ENCODE measurements at regions of chr3 and their contacts with region 1.

Region 1: DNA sequence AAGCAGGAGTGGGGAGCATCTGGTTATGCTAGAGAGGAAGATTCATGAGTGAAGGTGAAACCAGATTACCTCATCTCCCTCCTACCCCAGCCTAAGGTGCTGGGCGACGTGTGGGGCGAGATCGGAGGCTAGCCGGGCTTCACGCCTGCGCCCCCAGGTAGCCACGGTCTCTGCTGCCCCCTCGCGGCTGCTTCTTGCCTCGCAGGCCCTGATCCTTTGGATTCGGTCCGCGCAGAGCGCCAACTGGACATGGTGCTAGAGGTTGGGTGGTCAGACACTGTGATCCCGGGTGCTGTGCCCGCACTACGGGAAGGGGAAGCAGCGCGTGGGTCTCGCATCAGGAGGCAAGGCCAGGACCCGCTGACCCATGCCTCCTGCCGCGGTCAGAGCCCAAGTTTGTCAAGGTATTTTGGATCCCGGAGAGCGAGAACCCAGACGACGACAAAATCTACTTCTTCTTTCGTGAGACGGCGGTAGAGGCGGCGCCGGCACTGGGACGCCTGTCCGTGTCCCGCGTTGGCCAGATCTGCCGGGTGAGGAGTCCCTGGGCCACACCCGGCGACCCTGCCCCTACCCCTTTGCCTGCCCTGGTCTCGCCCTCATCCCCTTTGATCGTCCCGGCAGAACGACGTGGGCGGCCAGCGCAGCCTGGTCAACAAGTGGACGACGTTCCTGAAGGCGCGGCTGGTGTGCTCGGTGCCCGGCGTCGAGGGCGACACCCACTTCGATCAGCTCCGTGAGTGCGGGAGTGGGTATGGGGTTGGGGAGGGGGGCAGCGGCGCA is 4.2 kb downstream of the SEMA3B start:
- DNase-seq: peak; percentile 96

Region 2: DNA sequence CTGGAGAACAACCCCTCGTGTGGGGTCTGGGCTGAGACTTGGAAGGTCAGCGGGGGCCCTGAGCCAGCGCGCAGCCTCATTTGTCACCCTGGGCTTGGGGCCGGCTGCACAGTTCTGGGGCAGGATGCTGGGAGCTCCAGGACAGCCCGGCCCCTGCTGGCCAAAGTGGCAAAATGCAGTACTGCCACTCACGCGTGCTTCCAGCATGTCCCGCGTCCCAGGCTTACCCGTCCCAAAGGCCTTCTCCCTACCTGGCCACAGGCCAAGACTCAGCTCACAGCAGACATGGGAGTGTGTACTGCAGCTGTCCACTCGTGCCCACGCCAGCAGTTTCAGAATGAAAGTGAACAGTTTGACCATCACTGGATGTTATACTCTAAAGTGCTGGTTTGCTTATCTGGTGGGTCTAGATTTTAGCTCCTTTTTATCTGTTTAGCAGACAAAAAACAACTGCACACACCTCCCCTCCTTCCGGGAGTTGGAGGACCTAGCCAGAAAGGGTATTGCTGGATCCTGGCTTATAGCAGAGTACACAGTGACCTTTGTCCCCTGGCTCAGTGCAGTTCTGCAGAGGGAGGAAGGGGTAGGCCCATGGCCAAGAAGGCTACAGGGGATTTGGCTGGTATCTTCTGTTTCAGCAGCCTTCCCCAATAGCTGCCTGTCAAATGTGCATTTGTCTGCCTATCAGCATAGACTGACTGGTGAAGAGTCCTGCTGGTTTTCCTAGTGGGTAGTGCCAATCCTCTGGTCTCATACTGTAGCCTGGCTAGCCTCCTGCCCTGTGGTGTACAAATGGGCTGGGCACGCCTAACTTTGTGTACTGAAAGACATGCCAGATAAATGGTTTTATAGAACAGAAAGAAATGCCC is 1532.9 kb before region 1 on chr3:
- intact Hi-C with region 1: loop called in 1 of 2 experiments (anchors 5 kb)
- DNase-seq: peak; percentile 95

Region 3: DNA sequence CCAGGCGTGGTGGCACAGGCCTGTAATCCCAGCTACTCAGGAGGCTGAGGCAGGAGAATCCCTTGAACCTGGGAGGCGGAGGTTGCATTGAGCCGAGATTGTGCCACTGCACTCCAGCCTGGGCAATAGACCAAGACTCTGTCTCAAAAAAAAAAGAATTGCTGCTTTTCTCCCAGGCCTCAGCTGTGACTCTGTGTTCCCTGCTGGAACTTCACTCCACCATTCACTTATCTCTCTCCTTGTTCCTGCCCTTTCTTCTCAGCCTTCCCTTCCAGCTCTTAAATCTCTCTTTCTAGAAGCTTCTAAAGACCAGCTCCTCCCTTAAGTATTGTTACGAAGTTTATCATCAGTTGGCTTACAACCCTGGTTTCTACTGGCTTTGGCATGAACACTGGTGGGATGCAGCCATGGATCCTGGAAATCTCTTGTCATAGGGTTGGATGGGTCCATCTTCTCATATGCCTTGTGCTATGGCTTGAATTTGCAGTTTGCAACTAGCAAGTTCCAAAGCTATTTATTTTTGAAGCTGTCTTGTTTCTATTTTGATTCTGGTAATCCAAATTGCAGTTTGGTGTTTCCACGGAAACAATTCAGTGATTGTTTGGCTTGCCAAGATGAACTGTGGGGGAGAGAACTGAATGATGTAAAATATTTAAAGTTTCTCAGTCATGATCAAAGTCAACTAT is 1006.5 kb before region 1 on chr3:
- intact Hi-C with region 1: loop called in 1 of 2 experiments (anchors 5 kb)
- DNase-seq: no peak

Region 4: GRCh38 chr3:50192689-50193141 is 80.4 kb before region 1 on chr3:
- intact Hi-C with region 1: loop called (anchors 2 to 5 kb)
- DNase-seq: peak; percentile 92

Region 5: DNA sequence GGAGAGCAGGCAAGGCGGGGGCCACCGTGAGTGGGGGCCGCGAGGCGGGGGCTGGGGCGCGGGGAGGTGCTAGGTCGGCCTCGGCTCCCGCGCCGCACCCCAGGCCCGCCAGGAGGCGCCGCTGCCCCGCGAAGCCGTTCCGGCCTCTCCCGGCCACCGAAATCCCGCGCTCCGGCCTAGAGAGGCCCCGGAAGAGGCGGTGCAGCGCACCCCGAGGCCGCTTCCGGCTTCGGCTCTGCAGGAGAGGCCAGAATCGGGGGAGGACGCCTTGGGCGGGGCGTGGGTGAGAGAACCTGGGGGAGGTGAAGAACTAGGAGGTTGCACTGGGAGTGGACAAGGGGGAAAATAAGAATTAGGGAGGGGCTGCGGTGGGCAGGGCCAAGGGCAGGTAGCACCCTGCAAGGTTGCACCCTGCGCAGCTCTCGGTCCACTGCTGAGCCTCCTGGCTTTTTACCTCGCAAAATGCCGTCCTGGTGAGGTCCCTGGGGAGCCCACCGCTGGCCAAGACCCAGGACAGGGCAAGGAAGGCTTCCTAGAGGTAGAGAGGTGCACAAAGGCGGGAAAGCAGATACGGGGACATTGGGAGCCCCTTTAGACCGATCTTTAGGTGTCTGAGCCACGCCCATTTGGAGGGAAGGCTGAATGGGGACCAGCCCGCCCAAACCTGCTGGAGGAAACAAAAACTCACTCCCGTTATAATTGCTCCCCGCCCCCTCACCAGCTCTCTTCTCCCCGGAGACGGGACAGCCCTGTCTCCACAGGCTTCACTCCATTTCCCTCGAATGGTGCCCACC is 45.5 kb before region 1 on chr3:
- intact Hi-C with region 1: loop called (anchors 2 to 5 kb)
- DNase-seq: peak; percentile 97

Measured in posterior vena cava (tissue), 2 donors.